Thyroid gland (tissue), 4 donors: ENCODE measurements at regions of chr7 and their contacts with region 1.

Region 1: DNA sequence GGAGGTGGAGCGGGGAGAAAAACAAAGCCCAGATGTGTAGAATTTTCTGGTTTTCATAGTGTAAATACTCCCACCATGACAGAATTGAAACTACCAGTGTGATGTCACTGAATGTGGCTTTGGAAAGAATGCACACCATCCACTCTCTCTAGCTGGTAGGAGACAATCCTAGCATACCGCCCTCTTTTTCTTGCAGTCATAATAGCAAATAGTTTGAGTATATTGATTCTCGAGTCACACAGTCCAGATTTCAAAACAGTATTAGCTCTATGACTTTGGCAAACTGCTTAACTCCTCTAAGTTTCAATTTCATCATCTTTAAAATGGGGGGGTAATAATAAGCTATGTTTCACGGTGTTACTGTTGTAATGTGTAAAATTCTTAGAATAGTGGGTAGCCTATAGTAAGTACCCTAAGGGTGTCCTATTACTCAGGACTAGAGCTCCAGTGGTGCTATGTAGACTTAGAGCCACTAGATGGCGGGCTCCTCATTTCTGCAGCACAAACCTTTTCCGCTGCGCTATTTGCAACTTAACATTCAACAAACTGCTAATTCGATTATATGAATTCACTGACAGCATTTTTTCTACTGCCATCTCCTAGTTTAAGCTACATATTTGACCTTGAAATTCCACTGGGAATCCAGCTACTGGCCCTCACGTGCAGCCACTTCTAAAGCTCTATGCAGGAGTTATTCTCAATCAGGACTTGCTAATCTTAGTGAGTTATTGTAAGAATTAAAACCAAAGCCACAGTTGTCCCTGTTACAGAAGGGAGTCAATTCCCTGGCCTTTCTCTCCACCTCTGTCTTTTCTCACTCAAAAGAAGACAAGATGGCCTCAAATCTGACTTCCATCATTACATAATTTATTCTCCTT is 18.7 kb downstream of the TAS2R40 start:
- DNase-seq: peak; percentile 69 to 74
- H3K4me3 ChIP-seq: no peak overlapping the region
- H3K27ac ChIP-seq: no peak overlapping the region
- H3K4me1 ChIP-seq: peaks cover 0 to 3% of the 10 kb centered on the region in 2 donors
- H3K27me3 ChIP-seq: no peaks in the 10 kb centered on the region
- CTCF ChIP-seq: peak; percentile 78 to 90 (median 87)
- POLR2A ChIP-seq: no peak

Region 2: DNA sequence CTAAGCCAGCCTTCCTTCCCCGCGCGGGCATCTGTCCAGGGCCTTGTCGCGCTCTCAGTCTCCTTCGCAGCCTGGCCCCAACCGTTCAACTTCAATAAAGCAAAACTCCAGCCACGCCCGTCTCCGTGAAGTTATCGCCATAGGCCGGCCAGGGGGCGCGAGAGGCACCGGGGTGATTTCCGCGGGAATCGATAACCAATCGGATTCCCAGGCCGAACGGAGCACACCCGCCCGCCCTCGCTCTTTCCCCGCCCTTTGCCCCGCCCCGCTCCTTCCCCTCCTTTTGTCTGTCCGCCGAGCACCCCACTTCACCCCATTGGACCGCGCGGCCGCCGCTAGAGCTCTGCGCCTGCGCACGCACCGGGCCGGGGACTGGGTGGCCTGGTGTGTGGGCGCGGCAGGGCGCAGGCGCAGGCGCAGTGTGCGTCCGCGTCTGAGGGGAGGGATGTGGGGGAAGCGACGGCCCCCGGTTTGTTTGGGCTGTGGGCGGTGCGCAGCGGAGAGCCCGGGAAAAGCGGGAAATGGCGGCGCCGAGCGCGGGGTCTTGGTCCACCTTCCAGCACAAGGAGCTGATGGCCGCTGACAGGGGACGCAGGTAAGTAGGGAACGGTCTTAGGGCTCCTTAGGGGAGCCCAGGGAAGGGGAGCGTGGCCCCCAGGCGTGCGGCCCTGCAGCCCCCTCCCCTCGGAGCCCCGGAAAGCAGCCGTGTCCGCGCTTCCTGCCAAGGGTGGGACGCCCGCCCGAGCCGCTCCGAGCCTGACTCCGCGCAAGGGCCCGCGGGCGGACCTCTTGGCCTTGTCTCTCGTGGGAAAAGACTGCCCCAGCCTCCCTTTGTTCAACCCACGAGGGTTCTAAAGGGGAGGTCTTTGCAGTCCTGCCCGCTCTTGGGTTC is 47.7 kb after region 1 on chr7 and contains the start of gene CASP2:
- intact Hi-C with region 1: loop called (anchors 5 kb)
- DNase-seq: peak; percentile 97 to 98
- H3K4me3 ChIP-seq: peak within 1 kb of the TSS; percentile 20 to 85 (median 66)
- H3K27ac ChIP-seq: peak within 1 kb of the TSS; percentile 63 to 83 (median 82)
- H3K4me1 ChIP-seq: peaks cover 9 to 44% of the 10 kb centered on the region in 2 donors
- H3K27me3 ChIP-seq: no peaks in the 10 kb centered on the region
- CTCF ChIP-seq: peak in 3 of 6 experiments; percentile 32 to 44 (median 33)
- POLR2A ChIP-seq: peak in 1 of 2 donors; percentile 85
- total RNA-seq, gene CASP2: 13.0 to 21.7 (median 17.5) TPM

Region 3: DNA sequence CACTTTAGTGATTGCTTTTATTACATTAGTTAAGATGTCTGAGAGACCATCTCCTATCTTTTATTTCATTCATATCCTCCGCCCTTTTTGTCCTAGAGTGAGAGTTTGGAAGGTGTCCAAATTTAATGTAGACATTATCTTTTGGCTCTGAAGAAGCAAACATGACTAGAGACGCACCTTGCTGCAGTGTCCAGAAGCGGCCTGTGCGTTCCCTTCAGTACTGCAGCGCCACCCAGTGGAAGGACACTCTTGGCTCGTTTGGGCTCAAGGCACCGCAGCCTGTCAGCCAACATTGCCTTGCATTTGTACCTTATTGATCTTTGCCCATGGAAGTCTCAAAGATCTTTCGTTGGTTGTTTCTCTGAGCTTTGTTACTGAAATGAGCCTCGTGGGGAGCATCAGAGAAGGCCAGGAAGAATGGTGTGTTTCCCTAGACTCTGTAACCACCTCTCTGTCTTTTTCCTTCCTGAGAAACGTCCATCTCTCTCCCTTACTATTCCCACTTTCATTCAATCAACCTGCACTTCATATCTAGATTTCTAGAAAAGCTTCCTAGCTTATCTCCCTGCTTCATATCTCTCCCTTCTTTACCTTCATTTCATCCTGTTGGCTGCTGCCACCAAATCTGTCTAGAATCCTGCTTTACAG is 65.0 kb after region 1 on chr7:
- intact Hi-C with region 1: loop called (anchors 5 kb)
- DNase-seq: peak; percentile 51 to 63
- H3K4me3 ChIP-seq: no peak overlapping the region
- H3K27ac ChIP-seq: no peak overlapping the region
- H3K4me1 ChIP-seq: no peaks in the 10 kb centered on the region
- H3K27me3 ChIP-seq: no peaks in the 10 kb centered on the region
- CTCF ChIP-seq: peak in 5 of 6 experiments; percentile 27 to 65 (median 51)
- POLR2A ChIP-seq: no peak

Region 4: GRCh38 chr7:143321734-143322133 is 81.2 kb after region 1 on chr7:
- intact Hi-C with region 1: no loop called
- DNase-seq: no peak
- H3K4me3 ChIP-seq: no peak overlapping the region
- H3K27ac ChIP-seq: no peak overlapping the region
- H3K4me1 ChIP-seq: peaks cover 8 to 15% of the 10 kb centered on the region in 2 donors
- H3K27me3 ChIP-seq: no peaks in the 10 kb centered on the region
- CTCF ChIP-seq: no peak
- POLR2A ChIP-seq: no peak

Region 5: GRCh38 chr7:143416565-143417149 is 176.1 kb after region 1 on chr7:
- intact Hi-C with region 1: loop called (anchors 5 kb)
- DNase-seq: no peak
- H3K4me3 ChIP-seq: no peak overlapping the region
- H3K27ac ChIP-seq: no peak overlapping the region
- H3K4me1 ChIP-seq: no peaks in the 10 kb centered on the region
- H3K27me3 ChIP-seq: no peaks in the 10 kb centered on the region
- CTCF ChIP-seq: peak; percentile 54 to 74 (median 62)
- POLR2A ChIP-seq: no peak